ENCODE measurements at regions of chr11 and their contacts with region 1.

Region 1: GRCh38 chr11:119144825-119145486 is 3.9 kb upstream of the ABCG4 start:
- DNase-seq: peak; percentile 44 to 53
- ATAC-seq: peak; percentile 48 to 82 (median 78)
- H3K4me3 ChIP-seq: no peak overlapping the region
- H3K27ac ChIP-seq: no peak overlapping the region
- H3K4me1 ChIP-seq: peaks cover 0 to 20% (median 11%) of the 10 kb centered on the region in 9 donors
- H3K27me3 ChIP-seq: peaks cover 0 to 49% (median 18%) of the 10 kb centered on the region in 7 donors
- CTCF ChIP-seq: peak; percentile 44 to 74 (median 68)

Region 2: DNA sequence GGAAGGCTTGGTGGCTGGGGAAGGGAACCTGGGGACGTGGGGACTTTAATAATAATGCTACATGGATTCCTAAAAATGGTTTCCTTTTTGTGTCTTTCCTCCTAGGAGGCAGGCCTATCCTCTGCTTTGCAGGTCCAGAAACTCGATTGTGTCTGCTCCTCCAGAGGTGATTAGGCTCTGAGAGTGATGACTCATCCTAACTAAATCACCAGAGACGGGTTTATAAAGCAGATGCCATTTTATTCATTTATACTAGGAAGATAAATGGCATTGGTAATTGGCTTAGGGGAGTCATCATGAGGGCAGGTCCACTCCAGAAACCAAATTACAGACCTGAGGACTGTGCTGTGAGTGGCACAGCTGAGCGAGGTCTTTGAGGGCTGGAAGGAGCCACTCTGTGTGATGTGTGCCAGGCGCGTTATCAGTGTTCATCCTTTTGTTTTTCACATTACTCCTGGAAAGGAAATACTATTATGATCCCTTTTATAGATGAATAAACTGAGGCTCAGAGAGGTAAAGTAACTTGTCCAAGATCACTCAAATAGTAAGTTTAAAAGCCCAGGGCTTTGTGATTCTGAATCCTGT is 30.6 kb after region 1 on chr11:
- intact Hi-C with region 1: no loop called
- DNase-seq: no peak
- ATAC-seq: no peak
- H3K4me3 ChIP-seq: no peak overlapping the region
- H3K27ac ChIP-seq: no peak overlapping the region
- H3K4me1 ChIP-seq: peaks cover 0 to 20% (median 0%) of the 10 kb centered on the region in 9 donors
- H3K27me3 ChIP-seq: no peaks in the 10 kb centered on the region
- CTCF ChIP-seq: no peak

Region 3: GRCh38 chr11:119196833-119197483 is 52.0 kb after region 1 on chr11:
- intact Hi-C with region 1: loop called (anchors 2 to 10 kb)
- DNase-seq: peak in 1 of 2 donors; percentile 79
- ATAC-seq: peak; percentile 66 to 91 (median 84)
- H3K4me3 ChIP-seq: no peak overlapping the region
- H3K27ac ChIP-seq: no peak overlapping the region
- H3K4me1 ChIP-seq: peaks cover 0 to 18% (median 0%) of the 10 kb centered on the region in 9 donors
- H3K27me3 ChIP-seq: no peaks in the 10 kb centered on the region
- CTCF ChIP-seq: peak; percentile 66 to 87 (median 81)

Region 4: DNA sequence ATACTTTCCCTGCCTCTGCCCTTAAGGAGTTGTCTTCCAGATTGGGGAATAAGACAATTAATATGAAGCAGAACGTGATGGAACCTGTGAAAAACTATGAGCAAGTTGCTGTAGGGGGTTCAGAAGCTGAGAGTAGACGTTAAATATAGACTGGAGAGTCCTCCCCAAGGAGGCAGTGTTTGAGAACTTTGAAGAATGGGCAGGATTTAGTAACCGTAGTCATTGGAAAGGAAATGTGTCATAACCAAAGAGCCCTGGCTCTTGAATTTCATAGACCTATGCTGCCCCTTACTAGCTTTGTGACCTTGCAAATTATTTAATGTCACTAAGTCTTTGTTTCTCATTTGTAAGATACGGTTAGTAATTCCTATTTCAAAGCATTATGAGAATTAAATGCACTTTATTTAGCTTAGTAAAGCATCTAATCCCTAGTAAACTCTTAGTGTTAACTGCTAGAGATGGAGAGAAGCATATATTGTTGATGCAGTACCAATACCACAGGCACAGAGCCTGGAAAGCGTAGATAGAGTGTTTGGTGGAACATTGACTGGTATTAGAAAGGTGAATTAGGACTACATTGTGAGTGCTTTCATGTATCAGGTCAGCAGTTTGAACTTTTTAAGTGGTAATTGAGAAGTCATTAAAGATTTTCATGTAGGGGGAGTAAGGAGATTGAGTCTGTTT is 117.9 kb after region 1 on chr11:
- intact Hi-C with region 1: no loop called
- DNase-seq: no peak
- ATAC-seq: peak; percentile 41 to 84 (median 70)
- H3K4me3 ChIP-seq: no peak overlapping the region
- H3K27ac ChIP-seq: peak overlapping the region in 9 of 10 donors; percentile 18 to 81 (median 73)
- H3K4me1 ChIP-seq: peaks cover 5 to 94% (median 31%) of the 10 kb centered on the region in 9 donors
- H3K27me3 ChIP-seq: no peaks in the 10 kb centered on the region
- CTCF ChIP-seq: peak in 4 of 9 donors; percentile 20 to 44 (median 27)

Region 5: DNA sequence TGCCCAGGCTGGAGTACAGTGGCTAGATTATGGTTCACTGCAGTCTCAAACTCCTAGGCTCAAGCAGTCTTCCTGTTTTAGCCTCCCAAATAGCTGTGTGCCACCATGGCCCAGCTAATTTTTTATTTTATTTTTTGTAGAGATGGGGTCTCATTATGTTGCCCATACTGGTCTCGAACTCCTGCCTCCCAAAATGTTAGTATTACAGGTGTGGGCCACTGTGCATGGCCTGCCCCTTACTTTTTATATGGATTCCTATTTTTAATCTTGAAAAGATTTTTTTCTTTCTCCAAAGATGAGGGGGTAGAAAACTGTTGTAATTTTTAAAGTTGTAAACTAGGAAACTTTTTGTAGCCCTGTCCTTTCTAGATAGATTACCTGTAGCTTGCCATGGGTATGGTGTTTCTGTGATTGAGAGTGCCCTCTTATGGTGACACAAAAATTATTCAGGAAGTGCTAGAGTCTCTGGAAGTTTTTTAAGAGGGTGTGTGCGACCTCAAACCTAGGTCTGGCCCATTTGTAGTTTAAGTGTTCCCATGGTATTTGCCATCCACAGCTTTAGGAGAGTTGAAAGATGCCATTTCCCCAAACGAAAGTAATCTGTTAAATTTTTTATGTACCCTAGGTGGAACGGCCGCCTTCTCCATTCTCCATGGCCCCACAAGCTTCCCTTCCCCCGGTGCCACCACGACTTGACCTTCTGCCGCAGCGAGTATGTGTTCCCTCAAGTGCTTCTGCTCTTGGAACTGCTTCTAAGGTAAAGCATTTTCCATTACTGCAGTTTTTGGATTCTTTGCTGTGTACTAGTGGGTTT is 139.6 kb after region 1 on chr11:
- intact Hi-C with region 1: loop called in 1 of 10 experiments (anchors 10 kb)
- DNase-seq: no peak
- ATAC-seq: peak in 7 of 8 donors; percentile 65 to 75 (median 74)
- H3K4me3 ChIP-seq: no peak overlapping the region
- H3K27ac ChIP-seq: no peak overlapping the region
- H3K4me1 ChIP-seq: peaks cover 0 to 9% (median 0%) of the 10 kb centered on the region in 9 donors
- H3K27me3 ChIP-seq: no peaks in the 10 kb centered on the region
- CTCF ChIP-seq: peak; percentile 12 to 73 (median 59)

Region 6: DNA sequence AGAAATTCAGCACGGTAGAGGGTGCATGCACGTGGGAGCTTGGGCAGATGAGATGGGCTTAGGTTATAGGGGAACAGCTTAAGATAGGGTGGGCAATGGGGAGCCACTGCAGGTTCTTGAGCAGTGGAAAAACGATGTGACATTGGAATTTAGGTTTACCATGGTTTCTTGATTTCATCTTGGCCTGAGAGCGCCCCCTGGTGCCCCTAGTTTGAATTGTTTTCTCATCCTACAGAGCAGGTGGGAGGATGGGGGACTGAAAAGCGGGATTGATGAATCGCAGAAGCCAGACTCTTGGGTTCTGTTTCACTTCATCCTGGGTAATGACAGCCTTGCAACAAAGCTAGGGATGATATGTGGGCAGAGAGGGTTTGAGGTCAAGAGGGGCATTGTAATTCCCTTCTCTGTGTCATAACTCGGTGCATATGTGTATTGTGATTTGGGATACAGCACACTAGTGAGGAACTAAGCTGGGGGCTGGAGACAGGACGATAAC is 178.6 kb after region 1 on chr11:
- intact Hi-C with region 1: loop called in 1 of 10 experiments (anchors 10 kb)
- DNase-seq: peak in 1 of 2 donors; percentile 83
- ATAC-seq: no peak
- H3K4me3 ChIP-seq: no peak overlapping the region
- H3K27ac ChIP-seq: peak overlapping the region in 5 of 10 donors; percentile 6 to 99 (median 92)
- H3K4me1 ChIP-seq: peaks cover 4 to 55% (median 34%) of the 10 kb centered on the region in 9 donors
- H3K27me3 ChIP-seq: peaks cover 0 to 27% (median 0%) of the 10 kb centered on the region in 7 donors
- CTCF ChIP-seq: peak; percentile 68 to 87 (median 84)